ENCODE measurements at regions of chr11 and their contacts with region 1.

Region 1: GRCh38 chr11:45110562-45110961 is 35.9 kb upstream of the PRDM11 start:
- ATAC-seq: peak; percentile 59 to 89 (median 74)
- H3K4me3 ChIP-seq: no peak overlapping the region
- H3K27ac ChIP-seq: no peak overlapping the region
- H3K4me1 ChIP-seq: no peaks in the 10 kb centered on the region

Region 2: GRCh38 chr11:44434191-44434590 is 676.4 kb before region 1 on chr11:
- in situ Hi-C with region 1: no loop called
- ATAC-seq: no peak
- H3K4me3 ChIP-seq: no peak overlapping the region
- H3K27ac ChIP-seq: no peak overlapping the region
- H3K4me1 ChIP-seq: no peaks in the 10 kb centered on the region

Region 3: DNA sequence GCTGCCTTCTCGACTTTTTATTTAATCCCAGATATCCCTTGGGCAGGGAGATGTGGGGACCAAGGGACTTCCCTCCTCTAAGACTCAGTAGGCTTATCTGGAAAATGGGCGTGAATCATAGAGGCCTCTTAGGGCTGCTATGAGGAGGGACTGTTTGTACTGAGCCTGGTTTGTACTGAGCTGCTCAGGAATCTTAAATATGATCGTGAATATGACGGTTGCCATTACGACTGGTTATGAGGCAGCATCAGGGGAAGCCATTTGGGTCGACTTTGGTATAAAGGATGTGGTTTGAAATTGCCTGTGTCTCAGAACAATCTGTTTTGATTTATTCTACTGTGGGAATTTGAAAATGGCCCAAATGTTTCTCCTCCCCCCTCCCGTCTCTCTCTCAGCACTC is 363.2 kb before region 1 on chr11:
- in situ Hi-C with region 1: no loop called
- ATAC-seq: peak in 2 of 8 experiments; percentile 9 to 13
- H3K4me3 ChIP-seq: no peak overlapping the region
- H3K27ac ChIP-seq: no peak overlapping the region
- H3K4me1 ChIP-seq: peaks cover 43% of the 10 kb centered on the region in 2 donors

Region 4: DNA sequence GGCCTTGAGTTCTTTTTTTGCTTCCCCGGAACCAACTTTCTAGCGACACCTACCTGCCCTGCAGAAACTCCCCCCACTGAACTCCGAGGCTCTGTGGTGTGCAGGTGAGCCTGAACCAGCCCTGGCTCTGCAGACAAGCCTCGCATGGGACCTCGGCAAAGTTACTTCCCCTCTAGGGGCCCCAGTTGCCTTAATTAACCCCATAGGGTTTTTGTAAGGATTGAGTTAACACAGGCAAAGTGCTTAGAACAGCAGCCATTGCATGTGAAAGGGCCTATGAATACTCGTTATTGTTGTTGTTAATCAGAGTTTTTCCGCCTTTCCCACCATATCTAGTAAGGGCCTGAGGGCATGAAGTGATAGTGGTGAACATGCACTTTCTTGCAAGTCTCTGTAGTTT is 188.2 kb after region 1 on chr11:
- in situ Hi-C with region 1: loop called in 7 of 9 experiments (anchors 10 to 25 kb)
- ATAC-seq: no peak
- H3K4me3 ChIP-seq: no peak overlapping the region
- H3K27ac ChIP-seq: no peak overlapping the region
- H3K4me1 ChIP-seq: no peaks in the 10 kb centered on the region

Region 5: GRCh38 chr11:45322891-45323600 is 212.5 kb after region 1 on chr11:
- in situ Hi-C with region 1: loop called in 3 of 9 experiments (anchors 10 kb)
- ATAC-seq: no peak
- H3K4me3 ChIP-seq: no peak overlapping the region
- H3K27ac ChIP-seq: no peak overlapping the region
- H3K4me1 ChIP-seq: no peaks in the 10 kb centered on the region

Measured in motor neuron (in vitro differentiated cells).